ENCODE measurements at regions of chrX and their contacts with region 1.

Region 1: GRCh38 chrX:119729408-119730201 is 28.8 kb upstream of the SOWAHD start:
- DNase-seq: peak; percentile 31
- ATAC-seq: peak; percentile 77
- H3K4me3 ChIP-seq: no peak overlapping the region
- H3K27ac ChIP-seq: no peak overlapping the region
- H3K4me1 ChIP-seq: no peaks in the 10 kb centered on the region
- H3K27me3 ChIP-seq: no peaks in the 10 kb centered on the region
- CTCF ChIP-seq: peak; percentile 61 to 85 (median 76)
- EP300 ChIP-seq: no peak
- POLR2A ChIP-seq: no peak
- RAD21 ChIP-seq: peak; percentile 89

Region 2: GRCh38 chrX:118164138-118164537 is 1565.5 kb before region 1 on chrX:
- CTCF ChIA-PET with region 1: no interaction called
- POLR2A ChIA-PET with region 1: no interaction called
- RAD21 ChIA-PET with region 1: no interaction called
- SMC1A ChIA-PET with region 1: no interaction called
- in situ Hi-C with region 1: no loop called
- intact Hi-C with region 1: no loop called
- DNase-seq: no peak
- ATAC-seq: no peak
- H3K4me3 ChIP-seq: no peak overlapping the region
- H3K27ac ChIP-seq: no peak overlapping the region
- H3K4me1 ChIP-seq: no peaks in the 10 kb centered on the region
- H3K27me3 ChIP-seq: no peaks in the 10 kb centered on the region
- CTCF ChIP-seq: no peak
- EP300 ChIP-seq: no peak
- POLR2A ChIP-seq: no peak
- RAD21 ChIP-seq: no peak

Region 3: DNA sequence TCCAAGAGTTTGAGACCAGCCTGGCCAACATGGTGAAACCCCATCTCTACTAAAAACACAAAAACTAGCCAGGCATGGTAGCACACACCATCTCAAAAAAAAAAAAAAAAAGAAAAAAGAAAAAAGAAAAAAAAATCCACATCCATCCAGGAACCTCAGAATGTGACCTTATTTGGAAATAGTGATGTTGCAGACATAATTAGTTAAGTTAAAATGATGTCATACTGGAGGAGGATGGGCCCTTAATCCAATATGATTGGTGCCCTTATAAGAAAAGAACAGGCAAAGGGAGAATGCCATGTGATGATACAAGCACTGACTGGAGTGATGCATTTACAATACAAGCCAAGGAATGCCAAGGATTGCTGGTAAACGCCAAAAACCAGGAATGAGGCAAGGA is 172.2 kb before region 1 on chrX:
- CTCF ChIA-PET with region 1: no interaction called
- POLR2A ChIA-PET with region 1: no interaction called
- RAD21 ChIA-PET with region 1: no interaction called
- SMC1A ChIA-PET with region 1: no interaction called
- in situ Hi-C with region 1: no loop called
- intact Hi-C with region 1: no loop called
- DNase-seq: no peak
- ATAC-seq: no peak
- H3K4me3 ChIP-seq: no peak overlapping the region
- H3K27ac ChIP-seq: no peak overlapping the region
- H3K4me1 ChIP-seq: no peaks in the 10 kb centered on the region
- H3K27me3 ChIP-seq: no peaks in the 10 kb centered on the region
- CTCF ChIP-seq: no peak
- EP300 ChIP-seq: no peak
- POLR2A ChIP-seq: no peak
- RAD21 ChIP-seq: no peak

Region 4: GRCh38 chrX:119606280-119607015 is 123.2 kb before region 1 on chrX and contains the start of gene NKRF:
- CTCF ChIA-PET with region 1: interaction called, 56 read pairs
- POLR2A ChIA-PET with region 1: interaction called, 10 read pairs
- RAD21 ChIA-PET with region 1: interaction called, 60 read pairs
- SMC1A ChIA-PET with region 1: interaction called, 62 read pairs
- in situ Hi-C with region 1: no loop called
- intact Hi-C with region 1: no loop called
- DNase-seq: peak; percentile 78
- ATAC-seq: peak; percentile 78
- H3K4me3 ChIP-seq: peak within 1 kb of the TSS; percentile 57
- H3K27ac ChIP-seq: peak within 1 kb of the TSS; percentile 85
- H3K4me1 ChIP-seq: no peaks in the 10 kb centered on the region; the same call in 1 of the 2 replicates
- H3K27me3 ChIP-seq: no peaks in the 10 kb centered on the region
- CTCF ChIP-seq: no peak
- EP300 ChIP-seq: no peak
- POLR2A ChIP-seq: peak; percentile 93
- RAD21 ChIP-seq: no peak
- polyA plus RNA-seq, gene NKRF: 6.2 to 9.5 TPM

Region 5: DNA sequence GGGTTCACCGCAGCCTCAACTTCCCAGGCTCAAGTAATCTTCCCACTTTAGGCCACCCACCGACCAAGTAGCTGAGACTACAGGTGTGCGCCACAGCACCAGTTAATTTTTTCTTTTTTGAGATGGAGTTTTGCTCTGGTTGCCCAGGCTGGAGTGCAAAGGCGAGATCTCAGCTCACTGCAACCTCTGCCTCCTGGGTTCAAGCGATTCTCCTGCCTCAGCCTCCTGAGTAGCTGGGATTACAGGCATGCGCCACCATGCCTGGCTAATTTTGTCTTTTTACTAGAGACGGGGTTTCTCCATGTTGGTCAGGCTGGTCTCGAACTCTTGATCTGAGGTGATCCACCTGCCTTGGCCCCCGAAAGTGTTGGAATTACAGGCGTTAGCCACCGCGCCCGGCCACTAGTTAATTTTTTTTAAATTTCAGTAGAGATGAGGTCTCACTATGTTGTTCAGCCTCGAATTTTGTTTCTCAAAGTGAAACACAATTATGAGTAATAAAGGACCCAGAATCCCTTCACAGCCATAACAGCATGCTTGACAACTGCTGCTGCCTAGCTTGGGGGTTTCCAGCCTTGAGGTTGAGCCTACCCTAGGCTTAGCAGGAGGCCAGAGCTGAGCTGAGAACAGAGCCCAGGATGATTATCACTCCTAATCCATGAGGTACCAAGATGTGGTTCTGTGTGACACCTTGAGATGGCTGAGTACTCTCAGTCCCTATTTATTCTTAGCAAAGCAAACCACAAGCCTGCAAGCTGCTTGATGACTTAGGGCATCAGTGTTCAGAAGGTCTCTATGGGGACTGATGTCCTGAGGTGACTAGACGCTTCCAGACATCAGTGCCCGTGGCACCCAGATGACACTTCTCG is 81.8 kb before region 1 on chrX:
- CTCF ChIA-PET with region 1: interaction called, 15 read pairs
- POLR2A ChIA-PET with region 1: interaction called, 3 read pairs
- RAD21 ChIA-PET with region 1: interaction called, 8 read pairs
- SMC1A ChIA-PET with region 1: interaction called, 17 read pairs
- in situ Hi-C with region 1: no loop called
- intact Hi-C with region 1: loop called (anchors 2 kb)
- DNase-seq: peak; percentile 98
- ATAC-seq: peak; percentile 95
- H3K4me3 ChIP-seq: 0 out of 2 replicates have a peak overlapping the region, but pooled peaks have one; percentile 11
- H3K27ac ChIP-seq: peak overlapping the region; percentile 89
- H3K4me1 ChIP-seq: peaks cover 47% of the 10 kb centered on the region
- H3K27me3 ChIP-seq: no peaks in the 10 kb centered on the region
- CTCF ChIP-seq: no peak
- EP300 ChIP-seq: peak; percentile 94 to 97
- POLR2A ChIP-seq: peak; percentile 53
- RAD21 ChIP-seq: no peak

Region 6: DNA sequence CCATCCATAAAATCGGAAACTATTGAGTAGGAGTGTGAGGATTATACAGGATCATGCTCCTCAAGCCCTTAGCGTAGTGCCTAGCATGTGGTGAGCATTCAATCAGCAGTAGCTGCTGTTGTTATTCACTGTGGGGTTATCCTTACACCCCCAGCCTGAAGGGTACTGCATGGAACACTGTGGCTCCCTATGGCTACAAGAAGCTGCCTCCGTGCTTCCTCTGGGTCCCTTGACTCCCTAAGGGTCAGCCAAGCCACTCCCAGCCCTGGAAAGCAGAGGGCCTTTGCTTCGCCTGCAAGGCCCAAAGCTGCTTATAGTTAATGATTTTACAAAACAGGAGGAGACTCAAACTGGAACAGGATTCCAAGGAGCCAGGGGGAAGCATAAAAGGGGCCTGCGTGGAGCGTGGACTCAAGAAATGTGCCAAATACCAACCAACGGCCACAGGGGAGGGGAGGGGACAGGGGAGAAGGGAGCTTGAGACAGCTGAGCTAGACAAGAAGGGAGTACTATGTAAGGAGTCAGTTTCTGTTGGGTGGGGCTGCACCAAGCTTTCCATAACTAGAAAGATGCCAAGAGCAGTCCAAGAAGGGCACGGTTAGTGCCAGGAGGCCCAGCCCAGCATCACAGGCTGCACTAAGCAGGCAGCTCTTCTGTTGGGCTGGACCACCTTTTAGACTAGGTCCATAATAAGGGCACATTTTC is 52.5 kb before region 1 on chrX:
- CTCF ChIA-PET with region 1: interaction called, 29 read pairs
- POLR2A ChIA-PET with region 1: no interaction called
- RAD21 ChIA-PET with region 1: interaction called, 8 read pairs
- SMC1A ChIA-PET with region 1: interaction called, 15 read pairs
- in situ Hi-C with region 1: no loop called
- intact Hi-C with region 1: no loop called
- DNase-seq: no peak
- ATAC-seq: no peak
- H3K4me3 ChIP-seq: no peak overlapping the region
- H3K27ac ChIP-seq: peak overlapping the region; percentile 71
- H3K4me1 ChIP-seq: peaks cover 35% of the 10 kb centered on the region
- H3K27me3 ChIP-seq: no peaks in the 10 kb centered on the region
- CTCF ChIP-seq: no peak
- EP300 ChIP-seq: no peak
- POLR2A ChIP-seq: no peak
- RAD21 ChIP-seq: no peak

Region 7: GRCh38 chrX:119706616-119707015 is 23.0 kb before region 1 on chrX:
- CTCF ChIA-PET with region 1: interaction called, 16 read pairs
- POLR2A ChIA-PET with region 1: no interaction called
- RAD21 ChIA-PET with region 1: interaction called, 10 read pairs
- SMC1A ChIA-PET with region 1: interaction called, 43 read pairs
- in situ Hi-C with region 1: no loop called
- intact Hi-C with region 1: no loop called
- DNase-seq: no peak
- ATAC-seq: peak; percentile 95
- H3K4me3 ChIP-seq: no peak overlapping the region
- H3K27ac ChIP-seq: no peak overlapping the region
- H3K4me1 ChIP-seq: peaks cover 2% of the 10 kb centered on the region; the same call in 1 of the 2 replicates
- H3K27me3 ChIP-seq: no peaks in the 10 kb centered on the region
- CTCF ChIP-seq: no peak
- EP300 ChIP-seq: peak in 1 of 2 experiments; percentile 61; a peak in 1 of 4 replicates
- POLR2A ChIP-seq: no peak
- RAD21 ChIP-seq: no peak

Region 8: DNA sequence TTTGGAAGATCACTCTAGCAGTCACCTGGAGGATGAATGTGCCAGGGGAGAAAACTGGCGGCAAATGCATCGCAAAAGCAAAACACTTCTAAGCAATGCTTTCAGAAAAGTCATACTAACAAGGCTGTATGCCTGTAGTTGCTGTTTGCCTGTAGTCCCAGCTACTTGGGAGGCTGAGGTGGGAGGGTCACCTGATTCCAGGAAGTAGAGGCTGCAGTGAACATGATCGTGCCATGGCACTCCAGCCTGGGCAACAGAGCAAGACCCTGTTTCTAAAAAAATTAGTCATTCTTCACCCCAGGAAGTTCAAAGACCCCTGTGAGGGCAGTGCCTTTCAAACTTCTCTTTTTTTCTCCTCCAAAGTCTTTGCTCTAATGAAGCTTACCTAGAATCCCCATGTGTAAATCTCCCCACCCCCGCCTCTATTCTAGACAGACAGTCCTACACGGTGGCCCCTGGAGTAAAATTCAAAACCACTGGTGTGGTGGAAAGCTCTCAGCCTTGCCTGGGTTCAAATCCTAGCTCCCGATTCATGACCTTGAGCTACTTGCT is 34.3 kb after region 1 on chrX:
- CTCF ChIA-PET with region 1: interaction called, 78 read pairs
- POLR2A ChIA-PET with region 1: no interaction called
- RAD21 ChIA-PET with region 1: interaction called, 11 read pairs
- SMC1A ChIA-PET with region 1: interaction called, 4 read pairs
- in situ Hi-C with region 1: no loop called
- intact Hi-C with region 1: no loop called
- DNase-seq: no peak
- ATAC-seq: peak; percentile 28
- H3K4me3 ChIP-seq: no peak overlapping the region
- H3K27ac ChIP-seq: no peak overlapping the region
- H3K4me1 ChIP-seq: peaks cover 13% of the 10 kb centered on the region
- H3K27me3 ChIP-seq: no peaks in the 10 kb centered on the region
- CTCF ChIP-seq: no peak
- EP300 ChIP-seq: no peak
- POLR2A ChIP-seq: no peak
- RAD21 ChIP-seq: no peak

Region 9: GRCh38 chrX:119916310-119916709 is 186.7 kb after region 1 on chrX:
- CTCF ChIA-PET with region 1: no interaction called
- POLR2A ChIA-PET with region 1: no interaction called
- RAD21 ChIA-PET with region 1: no interaction called
- SMC1A ChIA-PET with region 1: no interaction called
- in situ Hi-C with region 1: no loop called
- intact Hi-C with region 1: no loop called
- DNase-seq: no peak
- ATAC-seq: no peak
- H3K4me3 ChIP-seq: no peak overlapping the region
- H3K27ac ChIP-seq: no peak overlapping the region
- H3K4me1 ChIP-seq: no peaks in the 10 kb centered on the region
- H3K27me3 ChIP-seq: no peaks in the 10 kb centered on the region
- CTCF ChIP-seq: no peak
- EP300 ChIP-seq: no peak
- POLR2A ChIP-seq: no peak
- RAD21 ChIP-seq: no peak

Region 10: DNA sequence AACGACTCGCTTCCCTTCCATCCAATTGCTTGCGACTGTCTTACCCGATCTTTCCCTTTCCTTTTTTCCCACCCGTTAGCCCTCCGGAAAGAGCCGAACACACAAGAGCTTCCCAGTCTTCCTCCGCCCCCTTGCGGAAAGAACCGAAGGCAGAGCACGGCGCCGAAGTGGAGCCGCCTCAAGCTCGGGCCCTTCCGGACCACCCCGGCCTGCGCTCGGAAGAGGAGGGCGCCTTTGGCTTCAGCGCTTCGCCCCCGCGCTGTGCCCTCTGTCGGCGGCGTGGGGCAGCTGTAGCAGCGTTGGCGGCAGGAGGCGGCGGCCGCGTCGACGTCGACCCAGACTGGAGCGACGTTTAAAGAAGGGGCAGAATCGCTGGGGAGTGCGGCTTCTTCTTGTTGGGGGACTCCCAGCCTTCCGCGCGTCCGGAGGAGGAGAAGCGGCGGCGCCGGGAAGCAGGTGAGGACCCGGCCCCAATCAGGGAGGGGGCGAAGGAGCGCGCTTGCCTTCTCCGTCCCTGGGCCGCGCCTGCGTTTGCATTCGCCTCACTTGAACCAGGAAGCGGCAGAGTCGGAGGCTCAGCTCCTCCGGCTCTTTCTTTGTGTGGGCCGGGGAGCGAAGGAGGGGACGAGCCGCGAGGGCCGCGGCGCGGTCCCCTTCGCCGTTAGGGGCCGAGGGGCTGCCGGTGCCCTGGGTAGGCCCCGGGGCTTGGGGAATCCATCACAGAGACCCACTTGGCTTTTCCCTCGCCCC is 521.1 kb after region 1 on chrX and contains the start of gene ZBTB33:
- CTCF ChIA-PET with region 1: no interaction called
- POLR2A ChIA-PET with region 1: no interaction called
- RAD21 ChIA-PET with region 1: no interaction called
- SMC1A ChIA-PET with region 1: no interaction called
- in situ Hi-C with region 1: no loop called
- intact Hi-C with region 1: no loop called
- DNase-seq: peak; percentile 60
- ATAC-seq: peak; percentile 99
- H3K4me3 ChIP-seq: peak within 1 kb of the TSS; percentile 69
- H3K27ac ChIP-seq: peak within 1 kb of the TSS; percentile 68
- H3K4me1 ChIP-seq: no peaks in the 10 kb centered on the region
- H3K27me3 ChIP-seq: no peaks in the 10 kb centered on the region
- CTCF ChIP-seq: peak; percentile 53 to 63 (median 55); a peak in 5 of 6 replicates
- EP300 ChIP-seq: no peak
- POLR2A ChIP-seq: peak; percentile 75
- RAD21 ChIP-seq: peak; percentile 19; the same call in 1 of the 2 replicates
- polyA plus RNA-seq, gene ZBTB33: 5.2 to 5.4 TPM